Calu3 (cell line): ENCODE measurements at regions of chr17 and their contacts with region 1.

Region 1: DNA sequence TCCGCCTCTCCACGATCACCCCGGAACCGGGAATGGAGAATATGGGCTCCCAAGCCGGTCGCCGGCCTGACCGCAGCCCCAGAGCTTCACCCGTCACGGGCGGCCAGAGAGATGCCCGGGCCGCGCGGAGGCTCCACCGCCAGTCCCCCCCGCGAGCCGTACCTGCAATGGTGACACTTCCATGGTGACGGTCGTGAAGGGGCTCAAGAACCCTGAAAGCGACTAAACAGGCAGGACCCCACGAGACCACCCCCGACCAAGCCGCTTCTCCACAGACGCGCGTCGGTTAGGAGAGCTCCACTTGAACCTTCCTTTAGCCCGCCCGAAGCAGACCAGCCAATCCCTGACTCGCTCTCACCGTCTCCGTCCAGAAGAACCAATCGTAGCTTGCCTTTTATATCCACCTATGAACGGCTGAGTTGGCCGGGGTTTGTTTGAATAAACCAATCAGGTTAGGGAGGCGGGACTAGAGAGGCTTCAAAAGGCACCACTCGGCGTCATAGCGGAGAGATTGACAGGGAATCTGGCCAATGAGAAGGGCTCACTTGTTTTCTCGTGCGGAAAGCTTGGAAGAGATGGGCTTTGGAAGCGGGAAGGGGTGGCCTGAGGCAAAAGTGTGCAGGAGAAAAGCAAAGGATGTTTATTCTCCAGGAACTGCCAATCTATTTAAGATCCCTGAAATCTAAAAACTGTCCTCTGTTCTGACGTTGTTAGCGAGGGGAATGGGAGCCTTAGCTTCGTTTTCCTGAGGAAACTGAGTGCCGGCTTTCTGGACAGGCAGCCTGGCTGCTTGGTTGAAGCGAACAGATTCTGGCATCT is at the start of gene TOP2A:
- DNase-seq: peak; percentile 100
- H3K4me3 Mint-ChIP-seq: peak within 1 kb of the TSS; percentile 96
- H3K27ac Mint-ChIP-seq: peak within 1 kb of the TSS; percentile 94
- H3K4me1 Mint-ChIP-seq: peaks cover 42% of the 10 kb centered on the region
- H3K27me3 Mint-ChIP-seq: no peaks in the 10 kb centered on the region
- CTCF ChIP-seq: no peak
- total RNA-seq, gene TOP2A: 1,389 and 1,672 TPM in 2 replicates

Region 2: DNA sequence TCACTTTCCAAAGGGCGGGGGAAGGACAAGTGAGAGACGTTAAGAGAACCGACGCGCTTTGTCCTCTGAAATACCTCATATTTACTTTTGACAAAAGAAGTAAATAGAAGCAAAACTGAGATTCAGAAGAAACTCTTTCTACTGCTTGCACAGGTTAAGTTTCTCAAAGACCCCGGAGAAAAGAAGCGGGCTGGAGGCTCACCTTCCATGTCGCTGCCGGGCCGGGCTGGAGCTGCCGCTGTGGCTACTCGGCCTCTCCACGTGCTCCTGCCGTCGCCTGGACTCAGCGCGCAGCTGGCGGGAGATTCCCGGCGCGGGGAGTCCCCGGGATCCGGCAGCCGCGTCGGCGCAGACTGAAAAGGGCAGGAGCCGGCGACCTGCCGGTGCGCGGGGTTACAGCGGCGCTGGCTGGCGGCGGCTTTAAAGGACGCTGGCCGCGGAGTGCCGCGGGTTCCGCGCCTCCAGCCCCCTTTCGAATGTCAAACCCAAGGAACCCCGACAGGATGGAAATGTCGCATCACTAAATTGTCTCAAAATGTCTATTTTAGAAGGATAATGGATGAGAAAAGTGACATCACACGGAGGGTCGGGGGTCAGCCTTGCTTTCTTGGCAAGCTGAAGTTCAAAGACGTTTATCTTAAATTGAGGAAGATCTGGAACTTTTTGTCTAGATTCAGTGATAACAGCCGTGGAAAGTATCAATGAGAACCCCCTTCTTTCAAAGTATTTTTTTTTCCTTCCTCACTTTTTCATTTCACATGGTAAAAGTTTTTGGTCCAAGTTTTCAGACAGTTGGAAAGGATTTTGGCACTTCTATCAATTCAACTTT is 553.7 kb before region 1 on chr17 and contains the start of gene IKZF3:
- CTCF ChIA-PET with region 1: interaction called, 11 read pairs
- intact Hi-C with region 1: loop called (anchors 1 kb)
- DNase-seq: peak; percentile 100
- H3K4me3 Mint-ChIP-seq: peak within 1 kb of the TSS; percentile 67
- H3K27ac Mint-ChIP-seq: peak within 1 kb of the TSS; percentile 31
- H3K4me1 Mint-ChIP-seq: peaks cover 38% of the 10 kb centered on the region
- H3K27me3 Mint-ChIP-seq: peaks cover 53% of the 10 kb centered on the region
- CTCF ChIP-seq: no peak
- total RNA-seq, gene IKZF3: 30.9 and 41.0 TPM in 2 replicates

Region 3: GRCh38 chr17:39996800-39997199 is 421.0 kb before region 1 on chr17:
- CTCF ChIA-PET with region 1: interaction called, 13 read pairs
- intact Hi-C with region 1: no loop called
- DNase-seq: no peak
- H3K4me3 Mint-ChIP-seq: no peak overlapping the region
- H3K27ac Mint-ChIP-seq: no peak overlapping the region
- H3K4me1 Mint-ChIP-seq: no peaks in the 10 kb centered on the region
- H3K27me3 Mint-ChIP-seq: no peaks in the 10 kb centered on the region
- CTCF ChIP-seq: no peak

Region 4: DNA sequence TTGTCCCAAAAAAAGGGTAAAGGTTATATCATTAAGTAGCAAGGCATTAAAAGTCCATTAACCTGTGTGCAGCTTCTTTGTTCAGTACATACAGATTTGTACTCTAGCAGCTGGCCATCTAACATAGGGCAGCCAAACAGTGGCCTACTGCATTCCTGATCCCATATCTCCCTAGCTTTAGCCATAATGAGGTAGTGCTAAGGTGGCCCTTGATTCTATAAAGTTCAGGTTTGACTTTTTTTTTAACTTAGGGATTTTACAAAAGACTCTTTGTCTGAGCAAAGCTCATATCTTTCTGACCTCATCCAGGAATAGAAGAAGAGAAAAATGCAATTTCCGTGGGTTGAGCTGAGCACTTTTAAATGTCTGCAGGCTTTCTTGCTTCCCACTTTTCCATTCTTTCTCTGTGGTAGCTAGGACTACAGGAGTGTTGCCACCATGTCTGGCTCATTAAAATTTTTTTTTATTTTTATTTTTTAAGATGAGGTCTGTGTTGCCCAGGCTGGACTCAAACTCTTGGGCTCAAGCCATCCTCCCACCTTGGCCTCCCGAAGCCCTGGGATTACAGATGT is 149.6 kb before region 1 on chr17:
- CTCF ChIA-PET with region 1: no interaction called
- intact Hi-C with region 1: no loop called
- DNase-seq: peak; percentile 69
- H3K4me3 Mint-ChIP-seq: no peak overlapping the region
- H3K27ac Mint-ChIP-seq: no peak overlapping the region
- H3K4me1 Mint-ChIP-seq: no peaks in the 10 kb centered on the region
- H3K27me3 Mint-ChIP-seq: no peaks in the 10 kb centered on the region
- CTCF ChIP-seq: no peak

Region 5: DNA sequence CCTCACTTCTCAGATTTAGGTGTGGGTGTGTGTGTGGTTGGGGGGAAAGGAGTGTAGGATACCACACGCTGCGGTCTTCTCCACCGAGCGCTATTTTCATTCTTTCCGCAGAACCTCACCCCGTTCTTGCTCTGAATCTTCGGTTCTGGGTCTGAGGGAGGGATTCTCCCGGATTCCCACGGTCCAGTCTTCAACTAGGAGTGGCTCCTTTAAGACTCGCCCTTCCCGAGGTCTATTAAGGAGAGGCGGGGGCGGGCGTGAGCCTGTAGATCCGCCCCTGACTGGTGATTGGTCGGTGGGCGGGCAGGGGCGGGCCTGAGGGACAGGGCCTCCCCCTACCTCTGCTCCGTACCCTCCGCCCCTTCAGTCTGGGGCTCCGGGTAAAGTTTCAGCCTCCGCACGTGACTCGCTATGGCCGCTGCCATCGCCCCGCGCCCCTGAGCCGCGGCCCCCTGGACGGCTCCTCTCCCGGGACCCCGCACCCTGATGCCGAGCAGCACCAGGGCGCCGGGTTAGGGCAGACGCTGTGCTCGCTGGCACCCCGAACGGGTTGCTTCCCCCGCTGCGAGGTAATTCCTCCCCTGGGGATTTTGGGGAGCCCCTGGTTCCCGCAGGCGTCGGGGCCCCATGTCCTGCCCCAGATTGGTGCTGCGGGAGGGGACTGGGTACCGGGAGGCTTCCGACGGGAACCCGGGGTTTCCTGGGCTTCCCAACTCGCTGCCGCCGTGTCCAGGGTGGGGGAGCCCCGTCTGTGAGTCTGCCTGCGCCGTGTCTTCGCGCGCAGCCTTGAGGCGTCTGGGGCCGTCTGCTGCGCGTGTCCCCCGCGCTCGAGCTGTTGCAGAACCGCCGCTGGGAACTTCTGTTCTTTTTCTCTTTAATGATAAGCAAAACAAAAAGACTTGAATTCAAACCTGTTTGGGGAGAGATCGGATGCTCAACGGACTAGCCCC is 99.7 kb before region 1 on chr17:
- CTCF ChIA-PET with region 1: interaction called, 28 read pairs
- intact Hi-C with region 1: no loop called
- DNase-seq: peak; percentile 100
- H3K4me3 Mint-ChIP-seq: peak overlapping the region; percentile 89
- H3K27ac Mint-ChIP-seq: peak overlapping the region; percentile 71
- H3K4me1 Mint-ChIP-seq: peaks cover 45% of the 10 kb centered on the region
- H3K27me3 Mint-ChIP-seq: no peaks in the 10 kb centered on the region
- CTCF ChIP-seq: no peak

Region 6: GRCh38 chr17:40433551-40434415 is 16.0 kb after region 1 on chr17:
- CTCF ChIA-PET with region 1: interaction called, 115 read pairs
- intact Hi-C with region 1: no loop called
- DNase-seq: peak; percentile 94
- H3K4me3 Mint-ChIP-seq: no peak overlapping the region
- H3K27ac Mint-ChIP-seq: no peak overlapping the region
- H3K4me1 Mint-ChIP-seq: no peaks in the 10 kb centered on the region
- H3K27me3 Mint-ChIP-seq: peaks cover 43% of the 10 kb centered on the region
- CTCF ChIP-seq: no peak

Region 7: DNA sequence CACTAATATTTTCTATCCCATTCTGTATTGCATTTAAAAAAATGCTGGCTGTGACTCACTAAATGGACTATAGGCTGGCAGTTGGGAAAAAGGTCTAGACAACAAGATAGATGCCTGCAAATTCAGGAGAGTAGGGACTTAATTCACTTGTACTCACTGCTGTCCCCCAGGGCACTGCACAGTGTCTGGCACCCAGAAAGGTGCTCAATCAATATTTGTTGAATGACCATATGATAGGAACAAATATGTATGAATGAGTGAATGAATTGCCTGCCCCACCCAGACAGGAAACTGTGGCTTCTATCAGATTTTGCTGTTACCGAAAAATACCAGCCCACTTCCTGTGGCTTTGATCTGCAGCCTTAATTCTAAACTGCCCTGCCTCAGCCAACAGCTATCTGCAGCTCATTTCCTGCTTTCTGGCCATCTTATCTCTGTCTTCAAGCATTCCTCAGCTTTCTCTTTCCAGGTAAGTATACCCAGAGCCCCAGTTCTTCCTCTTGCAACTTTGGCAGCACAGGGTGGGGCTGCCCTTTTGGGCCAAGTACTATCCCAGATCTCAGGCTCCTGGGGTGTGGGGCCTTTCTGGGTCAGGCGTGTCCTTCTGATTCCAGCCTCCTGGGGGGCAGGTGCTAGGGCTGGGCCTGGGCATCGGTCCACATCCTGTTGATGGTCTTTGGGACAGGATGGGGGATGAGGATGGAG is 98.9 kb after region 1 on chr17:
- CTCF ChIA-PET with region 1: interaction called, 16 read pairs
- intact Hi-C with region 1: no loop called
- DNase-seq: peak; percentile 94
- H3K4me3 Mint-ChIP-seq: no peak overlapping the region
- H3K27ac Mint-ChIP-seq: peak overlapping the region; percentile 1
- H3K4me1 Mint-ChIP-seq: peaks cover 65% of the 10 kb centered on the region
- H3K27me3 Mint-ChIP-seq: peaks cover 26% of the 10 kb centered on the region
- CTCF ChIP-seq: no peak

Region 8: DNA sequence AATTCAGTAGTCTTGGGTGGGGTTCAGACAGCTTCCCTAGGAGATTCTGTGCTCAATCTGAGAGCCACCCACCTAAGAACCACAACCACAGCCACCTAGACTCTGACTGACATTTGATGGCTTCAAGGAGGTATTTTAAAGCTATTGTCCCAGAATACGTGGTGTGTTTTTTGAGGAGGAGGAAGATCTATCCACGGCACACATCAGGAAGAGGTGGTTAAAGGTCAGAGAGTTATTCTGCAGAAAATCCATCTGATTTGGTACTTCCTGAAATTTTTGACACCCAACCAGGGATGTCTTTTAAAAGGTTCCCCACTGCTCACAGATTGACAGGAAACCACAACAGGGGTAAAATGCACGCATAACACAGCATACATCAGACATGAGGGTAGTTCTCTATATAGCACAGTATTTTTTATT is 204.7 kb after region 1 on chr17:
- CTCF ChIA-PET with region 1: interaction called, 12 read pairs
- intact Hi-C with region 1: no loop called
- DNase-seq: peak; percentile 3
- H3K4me3 Mint-ChIP-seq: no peak overlapping the region
- H3K27ac Mint-ChIP-seq: no peak overlapping the region
- H3K4me1 Mint-ChIP-seq: peaks cover 14% of the 10 kb centered on the region
- H3K27me3 Mint-ChIP-seq: peaks cover 56% of the 10 kb centered on the region
- CTCF ChIP-seq: no peak

Region 9: DNA sequence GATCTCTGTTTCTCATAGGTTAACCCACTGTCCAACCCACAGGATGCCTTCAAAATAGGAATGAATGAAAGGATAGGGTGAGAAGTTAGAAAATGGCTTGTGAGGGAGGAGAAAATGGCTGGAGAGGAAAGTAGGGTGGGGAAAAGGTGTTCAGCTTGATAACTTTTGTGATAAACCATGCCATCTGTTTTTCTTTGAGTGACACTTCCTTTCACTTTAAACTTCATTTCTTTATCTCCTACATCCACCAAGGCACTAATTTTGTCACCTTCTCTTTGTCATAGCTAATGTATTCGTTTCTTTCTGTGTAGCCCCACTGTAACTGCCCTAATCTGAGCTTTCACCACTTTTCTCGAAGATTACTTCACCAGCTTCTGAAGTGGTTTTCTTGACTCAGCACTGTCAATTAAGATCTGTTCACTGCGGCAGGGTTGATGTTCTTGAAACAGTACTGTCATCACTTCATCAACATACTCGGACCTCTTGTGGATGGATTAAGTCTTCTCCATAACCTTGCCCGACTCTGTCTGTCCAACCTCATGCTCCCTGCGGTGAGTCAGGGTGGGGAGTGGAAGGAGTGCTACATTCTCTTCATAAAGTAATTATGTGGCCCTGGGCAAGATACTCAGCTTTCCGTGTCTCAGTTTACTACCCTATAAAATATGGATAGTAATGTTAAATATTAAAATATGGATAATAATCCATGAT is 410.1 kb after region 1 on chr17:
- CTCF ChIA-PET with region 1: no interaction called
- intact Hi-C with region 1: no loop called
- DNase-seq: no peak
- H3K4me3 Mint-ChIP-seq: no peak overlapping the region
- H3K27ac Mint-ChIP-seq: no peak overlapping the region
- H3K4me1 Mint-ChIP-seq: peaks cover 8% of the 10 kb centered on the region
- H3K27me3 Mint-ChIP-seq: no peaks in the 10 kb centered on the region
- CTCF ChIP-seq: no peak